ENCODE measurements at regions of chr5 and their contacts with region 1.

Region 1: GRCh38 chr5:67209142-67209771 is 12.7 kb upstream of the CD180 start:
- DNase-seq: no peak
- ATAC-seq: peak; percentile 76

Region 2: DNA sequence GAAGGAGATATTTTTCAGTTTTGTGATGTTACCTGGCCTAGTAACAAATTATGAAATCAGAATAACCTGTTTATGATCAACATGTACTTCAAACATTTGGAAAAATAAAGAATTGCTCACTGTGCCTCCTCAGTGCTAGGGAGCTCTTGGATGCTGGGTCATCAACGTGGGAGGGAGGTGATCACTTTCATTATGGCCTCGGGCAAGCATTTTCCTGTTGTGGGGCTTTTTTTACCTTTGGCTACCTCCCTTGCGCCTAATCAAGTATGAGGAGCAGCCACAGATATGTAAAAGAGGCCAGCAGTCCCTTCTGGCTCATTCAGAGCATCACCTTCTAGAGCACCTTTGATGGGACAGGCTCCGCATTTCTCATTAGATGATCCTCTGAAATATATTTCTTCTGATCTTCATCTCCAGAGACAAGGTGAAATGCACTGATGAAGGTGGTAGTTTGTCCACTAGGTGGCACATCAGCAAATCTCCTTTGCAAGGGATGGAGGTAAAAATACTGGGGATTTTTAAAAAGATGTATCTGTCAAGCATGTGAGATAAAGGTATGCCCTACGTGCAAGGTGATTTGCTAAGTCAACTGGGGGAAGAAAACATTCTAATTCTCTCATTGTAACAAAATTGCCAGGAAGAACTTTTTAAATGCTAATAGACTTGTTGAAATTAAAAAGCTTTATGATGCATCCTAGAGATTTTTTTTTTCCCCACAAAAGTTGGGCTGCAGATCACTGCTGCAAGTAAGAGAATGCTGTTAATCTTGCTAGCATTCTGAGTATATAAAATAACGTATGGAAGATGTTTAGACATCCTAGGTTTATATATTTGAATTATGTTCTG is 394.9 kb before region 1 on chr5:
- intact Hi-C with region 1: loop called (anchors 5 kb)
- DNase-seq: no peak
- ATAC-seq: no peak

Region 3: DNA sequence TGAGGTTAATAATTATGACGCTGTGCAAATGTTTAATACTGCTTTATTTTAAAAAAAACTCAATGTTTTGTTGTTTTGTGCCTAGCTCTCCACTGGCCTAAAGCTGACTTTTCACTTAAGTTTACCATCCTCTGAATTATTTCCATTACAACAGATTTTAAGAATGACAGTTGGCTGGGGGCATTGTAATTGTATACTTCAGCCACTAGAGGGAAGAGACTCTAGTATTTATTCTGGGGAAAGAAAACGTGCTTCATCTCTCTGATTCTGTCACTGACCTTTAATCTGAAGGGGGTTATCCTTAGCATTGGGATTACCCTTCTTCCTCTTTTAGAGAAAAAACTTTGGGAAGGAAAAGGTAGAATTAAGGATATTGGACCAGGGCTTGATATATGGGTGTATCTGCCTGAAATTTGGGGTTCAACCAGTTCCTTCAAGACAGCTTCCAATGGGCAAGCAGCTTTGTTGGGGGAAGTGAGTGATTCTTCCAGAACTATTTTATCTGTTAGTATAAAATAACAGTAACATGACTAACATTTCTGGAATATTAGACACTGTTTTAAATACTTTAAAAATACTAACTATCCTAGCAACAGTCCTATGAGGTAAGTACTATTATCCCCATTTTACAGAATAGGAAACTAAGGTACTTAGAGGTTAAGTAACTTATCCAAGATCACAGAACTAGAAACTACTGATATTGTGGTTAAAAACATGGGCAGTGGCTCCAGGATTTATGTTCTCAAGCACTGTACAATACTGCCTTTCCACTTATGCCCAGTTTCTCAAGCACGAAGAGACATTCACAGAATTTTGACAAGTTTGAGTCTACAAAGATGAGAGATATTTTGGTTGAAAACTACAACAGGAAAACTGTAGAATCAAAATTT is 221.1 kb before region 1 on chr5:
- intact Hi-C with region 1: loop called (anchors 10 kb)
- DNase-seq: no peak
- ATAC-seq: peak; percentile 33

Region 4: DNA sequence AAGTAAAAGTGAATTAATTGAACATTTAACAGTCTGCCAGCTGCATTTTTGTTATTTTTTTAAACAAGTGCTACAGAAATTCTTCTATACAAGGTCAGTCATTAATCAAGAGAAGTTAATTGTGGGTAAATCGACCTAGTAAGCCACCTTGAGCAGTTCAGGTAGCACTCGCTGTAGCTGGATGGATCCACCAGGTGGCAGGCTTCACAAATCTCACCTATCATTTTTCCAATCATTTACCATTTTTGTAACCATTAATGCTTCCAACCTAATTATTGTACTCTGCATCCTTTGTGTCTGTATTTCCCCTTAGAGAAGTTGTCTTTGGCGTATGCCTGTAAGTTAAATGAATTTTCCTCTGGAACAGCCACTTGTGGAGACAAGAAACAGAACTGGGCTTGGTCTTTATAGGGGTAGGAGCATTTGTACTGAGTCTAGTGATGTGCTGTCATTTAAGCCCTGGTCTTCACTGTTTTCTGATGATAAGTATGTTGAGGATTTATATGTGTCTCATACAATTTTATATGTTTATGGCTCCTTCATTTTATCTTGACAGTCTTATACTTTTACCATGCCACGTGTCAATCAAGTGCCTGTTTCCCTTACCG is 52.2 kb before region 1 on chr5:
- intact Hi-C with region 1: loop called (anchors 2 kb)
- DNase-seq: no peak
- ATAC-seq: no peak

Region 5: GRCh38 chr5:67165526-67166459 is 43.5 kb before region 1 on chr5:
- intact Hi-C with region 1: loop called (anchors 2 kb)
- DNase-seq: peak; percentile 93
- ATAC-seq: peak; percentile 82

Measured in Right ventricle myocardium inferior (tissue), 1 donor.